ENCODE measurements at regions of chr4 and their contacts with region 1.

Region 1: GRCh38 chr4:140252742-140253555 is 99.0 kb upstream of the MAML3 start:
- DNase-seq: peak; percentile 75
- ATAC-seq: peak; percentile 57
- H3K4me3 Mint-ChIP-seq: peak overlapping the region; percentile 59
- H3K27ac Mint-ChIP-seq: peak overlapping the region; percentile 71
- H3K4me1 Mint-ChIP-seq: peaks cover 39% of the 10 kb centered on the region
- H3K27me3 Mint-ChIP-seq: peaks cover 15% of the 10 kb centered on the region

Region 2: GRCh38 chr4:139554893-139555704 is 697.9 kb before region 1 on chr4:
- CTCF ChIA-PET with region 1: no interaction called
- POLR2A ChIA-PET with region 1: no interaction called
- intact Hi-C with region 1: loop called in 1 of 2 experiments (anchors 5 kb)
- DNase-seq: peak; percentile 91
- ATAC-seq: peak; percentile 76
- H3K4me3 Mint-ChIP-seq: peak overlapping the region; percentile 96
- H3K27ac Mint-ChIP-seq: peak overlapping the region; percentile 91
- H3K4me1 Mint-ChIP-seq: peaks cover 45% of the 10 kb centered on the region
- H3K27me3 Mint-ChIP-seq: no peaks in the 10 kb centered on the region

Region 3: DNA sequence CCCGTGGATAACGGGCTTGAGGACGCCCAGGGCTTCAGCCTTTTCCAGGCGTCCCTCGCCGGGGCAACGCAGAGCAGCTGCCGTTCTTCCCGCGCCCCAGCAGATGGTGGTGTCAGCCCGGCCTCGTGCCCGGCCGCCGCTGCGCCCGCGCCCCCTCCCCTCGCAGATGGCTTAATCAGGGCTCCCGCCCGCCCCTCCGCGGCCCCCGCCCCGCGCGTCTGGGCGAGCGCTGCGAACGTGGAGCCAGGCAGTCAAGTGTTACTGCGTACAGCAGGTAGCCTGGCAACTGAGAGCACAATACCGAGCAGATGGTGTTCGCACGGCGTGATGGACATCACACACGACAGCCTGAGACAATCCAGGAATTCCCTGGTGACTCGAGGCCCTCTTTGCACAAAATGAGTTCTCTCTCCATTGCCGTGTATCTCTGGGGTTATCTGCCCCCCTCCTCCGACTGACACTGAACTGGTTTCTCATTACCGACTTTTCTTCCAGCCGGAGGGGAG is 518.0 kb before region 1 on chr4:
- CTCF ChIA-PET with region 1: interaction called, 3 read pairs
- POLR2A ChIA-PET with region 1: no interaction called
- intact Hi-C with region 1: loop called (anchors 1 to 2 kb)
- DNase-seq: peak; percentile 86
- ATAC-seq: peak; percentile 83
- H3K4me3 Mint-ChIP-seq: peak overlapping the region; percentile 65
- H3K27ac Mint-ChIP-seq: no peak overlapping the region
- H3K4me1 Mint-ChIP-seq: peaks cover 13% of the 10 kb centered on the region
- H3K27me3 Mint-ChIP-seq: peaks cover 33% of the 10 kb centered on the region

Region 4: GRCh38 chr4:140012688-140013486 is 240.1 kb before region 1 on chr4:
- CTCF ChIA-PET with region 1: interaction called, 31 read pairs
- POLR2A ChIA-PET with region 1: no interaction called
- intact Hi-C with region 1: loop called (anchors 1 kb)
- DNase-seq: peak; percentile 64
- ATAC-seq: peak; percentile 73
- H3K4me3 Mint-ChIP-seq: no peak overlapping the region
- H3K27ac Mint-ChIP-seq: no peak overlapping the region
- H3K4me1 Mint-ChIP-seq: peaks cover 9% of the 10 kb centered on the region
- H3K27me3 Mint-ChIP-seq: peaks cover 5% of the 10 kb centered on the region

Region 5: DNA sequence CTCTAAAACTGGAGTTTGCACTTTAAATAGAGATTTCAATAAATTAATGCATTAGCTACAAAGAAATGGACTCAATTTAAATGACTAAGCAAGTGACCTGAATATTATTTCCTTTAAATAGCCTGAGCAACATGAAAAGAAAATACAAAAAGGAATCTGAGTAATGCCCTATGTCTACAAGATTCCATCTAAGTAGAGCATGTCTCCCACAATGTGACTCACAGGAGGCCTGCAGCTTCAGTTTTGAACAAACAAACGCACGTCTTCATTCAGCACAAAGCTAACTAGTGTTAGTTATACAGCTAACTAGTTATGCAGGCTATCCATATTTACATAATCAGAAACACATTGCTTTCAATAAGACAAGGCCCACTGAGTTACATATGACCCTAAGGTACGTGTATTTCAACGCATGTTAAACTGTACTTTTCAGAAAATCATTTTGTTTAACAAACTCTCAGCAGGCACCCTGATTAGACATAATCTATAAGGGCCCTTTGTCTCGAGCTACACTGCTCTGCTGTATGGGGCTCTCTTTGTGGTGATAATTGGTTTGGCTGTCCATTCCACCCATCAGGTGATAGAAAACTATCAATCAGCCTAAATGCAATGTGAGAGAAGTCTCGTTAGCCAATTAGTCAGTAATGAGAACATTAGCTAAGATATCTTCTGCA is 215.5 kb before region 1 on chr4:
- CTCF ChIA-PET with region 1: no interaction called
- POLR2A ChIA-PET with region 1: no interaction called
- intact Hi-C with region 1: no loop called
- DNase-seq: peak; percentile 29
- ATAC-seq: peak; percentile 76
- H3K4me3 Mint-ChIP-seq: no peak overlapping the region
- H3K27ac Mint-ChIP-seq: no peak overlapping the region
- H3K4me1 Mint-ChIP-seq: peaks cover 15% of the 10 kb centered on the region
- H3K27me3 Mint-ChIP-seq: no peaks in the 10 kb centered on the region

Region 6: DNA sequence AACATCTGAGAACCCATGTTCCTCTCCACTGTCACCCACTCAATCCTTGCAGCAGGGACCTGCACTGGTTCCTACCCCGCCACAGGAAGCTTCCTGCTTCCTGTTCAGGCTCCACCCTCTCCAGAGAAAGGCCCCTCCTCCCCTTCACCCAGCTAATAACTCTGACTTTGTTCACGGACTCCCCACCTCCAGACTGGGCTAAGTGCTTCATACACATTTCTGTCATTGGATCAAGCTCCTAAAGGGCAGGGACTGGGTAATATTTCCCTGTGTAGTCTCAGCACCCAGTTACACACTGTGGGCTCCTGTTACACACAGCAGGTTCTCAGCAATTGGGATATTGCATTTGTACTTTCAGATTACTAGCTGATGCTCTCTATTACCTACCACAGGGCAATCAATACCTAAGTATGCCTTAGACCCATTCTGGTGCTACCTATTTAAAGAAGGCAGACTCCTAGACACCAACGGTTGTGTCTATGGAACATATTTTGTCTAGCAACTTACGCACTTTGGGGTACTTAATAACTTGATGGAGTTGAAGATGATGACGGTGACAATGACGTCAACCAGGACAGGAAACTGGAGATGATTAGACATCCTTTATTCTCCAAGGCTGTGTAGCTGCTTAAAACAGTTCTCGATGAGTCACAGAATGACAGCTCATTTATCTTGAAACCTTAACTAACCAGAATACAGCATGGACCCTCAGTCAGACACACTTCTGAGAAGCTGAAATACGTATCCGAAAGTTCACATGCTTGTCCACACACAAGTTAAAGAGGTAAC is 157.1 kb before region 1 on chr4:
- CTCF ChIA-PET with region 1: no interaction called
- POLR2A ChIA-PET with region 1: interaction called, 4 read pairs
- intact Hi-C with region 1: loop called in 1 of 2 experiments (anchors 1 kb)
- DNase-seq: peak; percentile 81
- ATAC-seq: peak; percentile 83
- H3K4me3 Mint-ChIP-seq: peak overlapping the region; percentile 75
- H3K27ac Mint-ChIP-seq: peak overlapping the region; percentile 99
- H3K4me1 Mint-ChIP-seq: peaks cover 93% of the 10 kb centered on the region
- H3K27me3 Mint-ChIP-seq: no peaks in the 10 kb centered on the region

Region 7: GRCh38 chr4:140777894-140778293 is 524.9 kb after region 1 on chr4:
- CTCF ChIA-PET with region 1: no interaction called
- POLR2A ChIA-PET with region 1: no interaction called
- intact Hi-C with region 1: no loop called
- DNase-seq: no peak
- ATAC-seq: no peak
- H3K4me3 Mint-ChIP-seq: no peak overlapping the region
- H3K27ac Mint-ChIP-seq: no peak overlapping the region
- H3K4me1 Mint-ChIP-seq: no peaks in the 10 kb centered on the region
- H3K27me3 Mint-ChIP-seq: peaks cover 2% of the 10 kb centered on the region

Measured in activated CD4-positive, alpha-beta T cell treated with anti-CD3 and anti-CD28 coated beads for 36 hours (primary cell).